Activated B cell treated with CpG ODN at 0.5 μM for 24 hours (primary cell): ENCODE measurements at regions of chr17 and their contacts with region 1.

Region 1: GRCh38 chr17:4625181-4625617 is 16.3 kb downstream of the ALOX15 start:
- DNase-seq: no peak
- ATAC-seq: no peak
- H3K4me3 Mint-ChIP-seq: no peak overlapping the region
- H3K27ac Mint-ChIP-seq: no peak overlapping the region
- H3K4me1 Mint-ChIP-seq: peaks cover 2% of the 10 kb centered on the region
- H3K27me3 Mint-ChIP-seq: peaks cover 10% of the 10 kb centered on the region
- CTCF ChIP-seq: no peak

Region 2: DNA sequence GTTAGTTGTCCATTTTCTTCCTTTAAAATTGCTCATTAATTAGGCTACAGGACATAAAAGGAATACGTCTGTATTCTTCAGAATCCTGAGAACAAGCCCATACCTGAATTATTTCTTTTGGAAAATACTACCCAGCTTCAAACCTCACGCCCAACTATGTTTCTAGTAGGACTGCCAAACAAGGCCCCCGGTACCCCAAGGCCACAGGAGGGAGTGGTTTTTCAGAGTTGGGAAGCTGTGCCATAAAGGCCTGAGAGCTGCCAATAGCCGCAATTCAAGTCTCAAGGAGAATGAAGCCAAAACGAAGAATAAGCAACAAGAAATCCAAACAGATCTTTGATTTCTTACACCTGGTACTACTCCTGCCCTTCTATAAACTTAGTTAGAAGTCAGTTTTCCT is 307.0 kb before region 1 on chr17:
- CTCF ChIA-PET with region 1: no interaction called
- POLR2A ChIA-PET with region 1: no interaction called
- intact Hi-C with region 1: no loop called
- DNase-seq: no peak
- ATAC-seq: no peak
- H3K4me3 Mint-ChIP-seq: no peak overlapping the region
- H3K27ac Mint-ChIP-seq: peak overlapping the region; percentile 12
- H3K4me1 Mint-ChIP-seq: peaks cover 63% of the 10 kb centered on the region
- H3K27me3 Mint-ChIP-seq: no peaks in the 10 kb centered on the region
- CTCF ChIP-seq: no peak

Region 3: GRCh38 chr17:4594931-4595684 is 30.1 kb before region 1 on chr17:
- CTCF ChIA-PET with region 1: no interaction called
- POLR2A ChIA-PET with region 1: no interaction called
- intact Hi-C with region 1: no loop called
- DNase-seq: no peak
- ATAC-seq: peak; percentile 73
- H3K4me3 Mint-ChIP-seq: no peak overlapping the region
- H3K27ac Mint-ChIP-seq: no peak overlapping the region
- H3K4me1 Mint-ChIP-seq: peaks cover 4% of the 10 kb centered on the region
- H3K27me3 Mint-ChIP-seq: peaks cover 23% of the 10 kb centered on the region
- CTCF ChIP-seq: no peak

Region 4: DNA sequence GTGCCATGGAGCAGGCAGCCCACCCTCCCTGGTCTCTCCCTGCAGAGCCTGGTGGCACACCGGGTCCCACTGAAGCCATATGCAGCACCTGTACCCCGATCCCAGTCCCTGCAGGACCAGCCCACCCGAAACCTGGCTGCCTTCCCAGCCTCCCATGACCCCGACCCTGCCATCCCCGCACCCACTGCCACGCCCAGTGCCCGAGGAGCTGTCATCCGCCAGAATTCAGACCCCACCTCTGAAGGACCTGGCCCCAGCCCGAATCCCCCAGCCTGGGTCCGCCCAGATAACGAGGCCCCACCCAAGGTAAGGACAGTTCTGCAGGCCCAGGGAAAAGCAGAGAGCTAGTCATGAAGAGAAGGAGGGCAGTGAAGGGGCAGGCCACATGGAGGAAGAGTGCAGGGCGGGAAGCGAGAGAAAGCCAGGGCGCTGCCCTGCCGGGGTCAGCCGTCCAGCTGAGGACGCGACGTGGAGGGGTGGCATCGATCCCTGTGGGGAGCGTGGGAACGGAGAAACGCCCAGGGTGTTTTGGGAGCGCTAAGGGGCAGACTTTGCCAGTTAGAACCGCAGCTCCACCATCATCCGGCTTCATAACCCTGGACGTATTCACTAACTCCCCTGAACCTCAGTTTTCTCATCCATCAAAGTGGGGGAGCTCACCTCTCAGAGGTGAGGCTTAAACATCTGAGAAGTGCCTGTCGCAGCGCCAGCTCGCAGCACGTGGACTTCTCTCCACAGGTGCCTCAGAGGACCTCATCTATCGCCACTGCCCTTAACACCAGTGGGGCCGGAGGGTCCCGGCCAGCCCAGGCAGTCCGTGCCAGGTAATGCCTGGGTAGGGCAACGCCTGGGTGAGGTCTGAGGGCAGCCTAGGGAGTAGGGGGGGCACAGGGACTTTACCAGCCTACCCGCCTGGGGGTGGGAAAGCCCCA is 266.5 kb after region 1 on chr17:
- CTCF ChIA-PET with region 1: interaction called, 3 read pairs
- POLR2A ChIA-PET with region 1: no interaction called
- intact Hi-C with region 1: loop called (anchors 1 kb)
- DNase-seq: no peak
- ATAC-seq: no peak
- H3K4me3 Mint-ChIP-seq: no peak overlapping the region
- H3K27ac Mint-ChIP-seq: no peak overlapping the region
- H3K4me1 Mint-ChIP-seq: peaks cover 4% of the 10 kb centered on the region
- H3K27me3 Mint-ChIP-seq: no peaks in the 10 kb centered on the region
- CTCF ChIP-seq: no peak